Heart right ventricle (tissue), 16 donors: ENCODE measurements at regions of chr7 and their contacts with region 1.

Region 1: DNA sequence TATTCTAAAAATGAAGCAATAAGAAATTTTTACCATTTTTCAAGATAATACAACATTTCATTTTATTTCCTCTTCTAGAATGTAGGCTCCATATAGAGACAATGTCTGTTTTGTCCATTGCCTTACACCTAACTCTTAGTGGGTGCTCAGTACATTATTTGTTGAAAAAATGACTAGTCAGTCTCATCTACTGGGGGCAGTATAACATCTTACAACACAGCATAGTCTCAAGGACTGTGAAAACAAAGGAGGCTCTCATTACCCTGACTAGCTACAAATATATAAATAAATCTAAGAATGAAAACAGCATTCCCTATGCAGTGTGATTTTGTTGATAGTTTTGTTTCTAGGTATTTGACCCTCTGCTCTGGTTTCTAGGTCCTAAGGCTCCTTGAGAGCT is 11.6 kb downstream of the CRPPA start:
- DNase-seq: no peak
- ATAC-seq: no peak
- H3K4me3 ChIP-seq: no peak overlapping the region
- H3K27ac ChIP-seq: no peak overlapping the region
- H3K4me1 ChIP-seq: peaks cover 0 to 19% (median 0%) of the 10 kb centered on the region in 9 donors
- H3K27me3 ChIP-seq: peaks cover 0 to 14% (median 0%) of the 10 kb centered on the region in 7 donors
- CTCF ChIP-seq: peak in 1 of 9 donors; percentile 29

Region 2: GRCh38 chr7:16114633-16115032 is 295.1 kb before region 1 on chr7:
- intact Hi-C with region 1: loop called in 1 of 10 experiments (anchors 10 kb)
- DNase-seq: no peak
- ATAC-seq: no peak
- H3K4me3 ChIP-seq: no peak overlapping the region
- H3K27ac ChIP-seq: no peak overlapping the region
- H3K4me1 ChIP-seq: no peaks in the 10 kb centered on the region
- H3K27me3 ChIP-seq: no peaks in the 10 kb centered on the region
- CTCF ChIP-seq: peak in 8 of 9 donors; percentile 20 to 63 (median 49)